Tibial artery (tissue), 4 donors: ENCODE measurements at regions of chr1 and their contacts with region 1.

Region 1: GRCh38 chr1:165592945-165593823 is 37.9 kb upstream of the MGST3 start:
- DNase-seq: peak; percentile 72 to 79
- H3K4me3 ChIP-seq: no peak overlapping the region
- H3K27ac ChIP-seq: no peak overlapping the region
- H3K4me1 ChIP-seq: peaks cover 0 to 6% (median 3%) of the 10 kb centered on the region in 4 donors
- H3K27me3 ChIP-seq: peaks cover 0 to 26% of the 10 kb centered on the region in 2 donors
- CTCF ChIP-seq: peak; percentile 90 to 95

Region 2: GRCh38 chr1:165392634-165393571 is 200.3 kb before region 1 on chr1:
- intact Hi-C with region 1: loop called (anchors 1 kb)
- DNase-seq: peak; percentile 91 to 92
- H3K4me3 ChIP-seq: peak overlapping the region in 1 of 2 donors; percentile 8
- H3K27ac ChIP-seq: no peak overlapping the region
- H3K4me1 ChIP-seq: peaks cover 0 to 7% (median 2%) of the 10 kb centered on the region in 4 donors
- H3K27me3 ChIP-seq: peaks cover 0 to 15% of the 10 kb centered on the region in 2 donors
- CTCF ChIP-seq: peak; percentile 90 to 93

Region 3: GRCh38 chr1:165630629-165631341 is 37.6 kb after region 1 on chr1 and contains the start of gene MGST3:
- intact Hi-C with region 1: no loop called
- DNase-seq: peak; percentile 94 to 97
- H3K4me3 ChIP-seq: peak within 1 kb of the TSS; percentile 67 to 90
- H3K27ac ChIP-seq: peak within 1 kb of the TSS; percentile 77 to 88
- H3K4me1 ChIP-seq: peaks cover 0 to 38% (median 32%) of the 10 kb centered on the region in 4 donors
- H3K27me3 ChIP-seq: no peaks in the 10 kb centered on the region
- CTCF ChIP-seq: no peak